ENCODE measurements at regions of chr1 and their contacts with region 1.

Region 1: GRCh38 chr1:9196129-9197040 is 38.2 kb upstream of the H6PD start:
- DNase-seq: peak; percentile 54 to 63
- H3K4me3 ChIP-seq: peak overlapping the region in 2 of 3 donors; percentile 3 to 53
- H3K27ac ChIP-seq: peak overlapping the region; percentile 49 to 87
- H3K4me1 ChIP-seq: no peaks in the 10 kb centered on the region
- H3K27me3 ChIP-seq: peaks cover 0 to 29% of the 10 kb centered on the region in 2 donors
- CTCF ChIP-seq: peak; percentile 75 to 86 (median 78)
- POLR2A ChIP-seq: no peak

Region 2: DNA sequence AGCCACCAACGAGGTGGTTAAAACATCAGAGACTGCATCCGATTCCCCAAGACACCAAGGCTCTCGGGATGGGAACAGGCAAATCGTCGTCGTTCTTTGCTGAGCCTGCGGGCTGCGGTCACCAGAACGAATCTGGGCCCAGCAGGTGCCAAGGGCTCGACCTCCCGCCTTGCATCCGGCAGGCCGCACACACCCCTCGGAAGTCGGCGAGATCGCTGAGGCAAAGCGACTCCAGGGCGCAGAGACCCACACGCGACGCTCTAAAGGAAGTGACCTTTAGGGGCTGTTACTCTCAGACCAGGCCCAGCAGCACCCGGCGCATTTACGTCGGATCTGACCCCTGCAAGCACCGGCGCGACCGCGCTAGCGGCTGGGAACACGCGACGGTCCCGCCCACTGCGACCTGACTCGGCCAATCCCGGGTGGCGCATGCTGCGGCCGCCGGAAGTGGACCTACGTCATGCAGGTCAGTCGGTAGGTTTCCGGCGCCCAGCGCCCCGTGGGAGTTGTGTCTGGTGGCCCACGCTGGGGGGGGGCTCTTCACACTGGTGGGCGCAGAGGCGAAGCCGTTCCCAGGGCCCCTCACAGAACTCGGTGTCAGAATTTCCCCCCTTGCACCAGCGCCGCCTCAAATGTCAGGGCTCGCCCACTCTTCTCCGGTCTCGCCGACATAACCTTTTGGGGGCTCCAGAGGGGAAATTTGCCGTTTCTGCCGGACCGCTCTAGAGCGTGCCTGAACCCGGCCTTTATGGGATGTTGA is 1242.4 kb before region 1 on chr1:
- intact Hi-C with region 1: loop called (anchors 5 kb)
- DNase-seq: peak; percentile 91 to 94
- H3K4me3 ChIP-seq: peak overlapping the region; percentile 59 to 77 (median 67)
- H3K27ac ChIP-seq: peak overlapping the region; percentile 86 to 95
- H3K4me1 ChIP-seq: no peaks in the 10 kb centered on the region
- H3K27me3 ChIP-seq: no peaks in the 10 kb centered on the region
- CTCF ChIP-seq: peak in 1 of 3 donors; percentile 11
- POLR2A ChIP-seq: peak; percentile 74

Region 3: DNA sequence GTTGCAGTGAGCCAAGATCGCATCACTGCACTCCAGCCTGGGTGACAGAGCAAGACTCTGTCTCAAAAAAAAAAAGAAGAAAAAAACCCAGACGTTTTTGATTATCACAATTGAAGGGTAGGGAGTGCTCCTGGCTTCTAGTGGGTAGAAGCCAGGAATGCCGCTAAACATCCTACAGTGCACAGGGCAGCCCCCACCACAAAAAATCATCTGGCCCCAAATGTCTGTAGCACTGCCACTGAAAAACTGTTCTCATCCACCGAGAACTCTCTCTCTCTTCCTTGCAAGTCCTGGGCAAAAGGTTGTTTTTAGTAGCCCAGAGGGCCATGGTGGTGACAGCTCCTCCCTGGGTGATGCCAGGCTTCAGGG is 31.9 kb before region 1 on chr1:
- intact Hi-C with region 1: loop called (anchors 1 kb)
- DNase-seq: no peak
- H3K4me3 ChIP-seq: no peak overlapping the region
- H3K27ac ChIP-seq: peak overlapping the region; percentile 86 to 93
- H3K4me1 ChIP-seq: peaks cover 7 to 27% of the 10 kb centered on the region in 2 donors
- H3K27me3 ChIP-seq: no peaks in the 10 kb centered on the region
- CTCF ChIP-seq: no peak
- POLR2A ChIP-seq: no peak

Region 4: GRCh38 chr1:9486466-9487140 is 290.2 kb after region 1 on chr1:
- intact Hi-C with region 1: no loop called
- DNase-seq: no peak
- H3K4me3 ChIP-seq: no peak overlapping the region
- H3K27ac ChIP-seq: no peak overlapping the region
- H3K4me1 ChIP-seq: no peaks in the 10 kb centered on the region
- H3K27me3 ChIP-seq: no peaks in the 10 kb centered on the region
- CTCF ChIP-seq: no peak
- POLR2A ChIP-seq: no peak

Measured in breast epithelium (tissue), 4 donors.